Tibial artery (tissue), 4 donors: ENCODE measurements at regions of chrX and their contacts with region 1.

Region 1: GRCh38 chrX:130909469-130910136 is 6.6 kb upstream of the ENOX2 start:
- DNase-seq: no peak
- H3K4me3 ChIP-seq: no peak overlapping the region
- H3K27ac ChIP-seq: peak overlapping the region; percentile 41 to 50
- H3K4me1 ChIP-seq: no peaks in the 10 kb centered on the region
- H3K27me3 ChIP-seq: no peaks in the 10 kb centered on the region
- CTCF ChIP-seq: no peak

Region 2: DNA sequence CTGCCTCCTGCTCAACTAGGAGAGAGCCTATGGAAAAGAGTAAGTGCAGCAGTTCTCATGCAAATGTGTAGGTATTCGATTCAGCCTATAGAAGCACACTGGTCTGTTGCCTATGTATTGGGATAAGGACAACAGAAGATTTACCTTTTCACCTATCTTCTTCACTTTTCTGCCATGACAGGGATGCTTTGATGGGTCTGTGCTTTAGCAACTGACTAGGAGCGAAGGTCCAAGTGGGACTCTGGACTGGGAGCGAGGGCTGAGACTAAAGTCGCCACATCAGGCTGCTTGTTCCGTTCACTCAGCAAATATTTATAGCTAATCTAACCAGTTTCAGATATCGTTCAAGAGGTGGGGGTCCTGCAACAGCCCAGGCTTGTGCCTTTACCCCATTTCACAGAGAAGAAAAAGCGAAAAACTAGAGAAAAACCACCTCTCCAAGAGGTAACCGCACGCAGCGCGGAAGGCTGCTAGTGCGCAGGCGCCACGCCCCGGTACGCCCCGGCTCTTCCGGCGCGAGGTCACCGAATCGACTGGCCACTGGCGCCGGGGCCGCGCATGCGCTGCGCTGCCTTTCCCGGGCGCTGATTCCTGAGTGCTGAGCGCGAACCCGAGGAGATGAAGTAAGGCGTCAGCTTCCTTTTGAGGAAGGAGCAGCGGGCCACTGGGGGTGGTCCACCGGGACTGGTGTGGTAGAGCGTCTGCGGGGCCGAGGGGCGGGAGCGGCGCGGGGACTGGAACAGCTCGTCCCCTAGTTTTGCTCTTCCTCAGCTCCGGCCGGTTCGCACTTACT is 508.0 kb before region 1 on chrX and contains the start of gene RBMX2:
- intact Hi-C with region 1: loop called (anchors 5 kb)
- DNase-seq: peak; percentile 69 to 82
- H3K4me3 ChIP-seq: peak within 1 kb of the TSS; percentile 66
- H3K27ac ChIP-seq: peak within 1 kb of the TSS; percentile 71 to 83
- H3K4me1 ChIP-seq: peaks cover 0 to 16% (median 0%) of the 10 kb centered on the region in 4 donors
- H3K27me3 ChIP-seq: no peaks in the 10 kb centered on the region
- CTCF ChIP-seq: no peak

Region 3: DNA sequence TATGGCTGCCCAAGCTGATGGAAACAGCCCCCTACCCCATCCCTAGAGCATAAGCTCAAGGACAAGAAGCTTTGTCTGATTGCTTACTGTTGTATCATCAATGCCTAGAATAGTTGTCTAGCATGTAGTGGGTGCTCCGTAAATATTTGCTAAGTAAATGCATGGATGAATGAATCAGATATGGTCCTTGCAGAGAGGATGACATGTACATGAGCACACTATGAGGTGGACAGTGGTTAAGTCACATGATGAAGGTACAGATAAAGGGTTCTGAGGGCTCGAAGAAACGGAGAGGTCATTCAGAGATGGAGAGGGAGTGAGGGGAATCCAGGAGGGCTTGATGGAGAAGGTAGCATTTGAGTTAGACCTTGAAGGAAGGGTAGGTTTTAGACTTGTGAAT is 293.7 kb before region 1 on chrX:
- intact Hi-C with region 1: no loop called
- DNase-seq: no peak
- H3K4me3 ChIP-seq: no peak overlapping the region
- H3K27ac ChIP-seq: no peak overlapping the region
- H3K4me1 ChIP-seq: no peaks in the 10 kb centered on the region
- H3K27me3 ChIP-seq: no peaks in the 10 kb centered on the region
- CTCF ChIP-seq: no peak

Region 4: DNA sequence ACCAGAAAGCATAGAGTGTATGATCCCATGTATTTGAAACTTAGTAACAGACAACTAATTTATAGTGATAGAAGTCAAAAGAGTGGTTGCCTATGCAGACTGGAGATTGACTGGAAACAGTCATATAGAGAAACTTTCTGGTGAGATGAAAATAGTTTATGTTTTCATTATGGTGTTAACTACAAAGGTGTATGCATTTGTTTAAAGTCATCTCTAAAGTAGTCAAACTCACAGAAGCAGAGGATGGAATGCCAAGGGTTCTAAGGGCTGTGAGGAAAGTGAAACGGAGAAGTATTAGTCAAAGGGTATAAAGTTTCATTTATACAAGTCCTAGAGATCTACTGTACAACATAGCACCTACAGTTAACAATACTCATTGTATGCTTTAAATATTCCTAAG is 52.4 kb before region 1 on chrX:
- intact Hi-C with region 1: no loop called
- DNase-seq: no peak
- H3K4me3 ChIP-seq: no peak overlapping the region
- H3K27ac ChIP-seq: no peak overlapping the region
- H3K4me1 ChIP-seq: no peaks in the 10 kb centered on the region
- H3K27me3 ChIP-seq: no peaks in the 10 kb centered on the region
- CTCF ChIP-seq: no peak